ENCODE measurements at regions of chr2 and their contacts with region 1.

Region 1: GRCh38 chr2:64144057-64145013 is at the start of gene PELI1:
- DNase-seq: peak; percentile 96
- H3K4me3 Mint-ChIP-seq: peak within 1 kb of the TSS; percentile 91
- H3K27ac Mint-ChIP-seq: peak within 1 kb of the TSS; percentile 88
- H3K4me1 Mint-ChIP-seq: peaks cover 24% of the 10 kb centered on the region
- H3K27me3 Mint-ChIP-seq: no peaks in the 10 kb centered on the region
- total RNA-seq, gene PELI1: 44.9 to 45.0 TPM

Region 2: DNA sequence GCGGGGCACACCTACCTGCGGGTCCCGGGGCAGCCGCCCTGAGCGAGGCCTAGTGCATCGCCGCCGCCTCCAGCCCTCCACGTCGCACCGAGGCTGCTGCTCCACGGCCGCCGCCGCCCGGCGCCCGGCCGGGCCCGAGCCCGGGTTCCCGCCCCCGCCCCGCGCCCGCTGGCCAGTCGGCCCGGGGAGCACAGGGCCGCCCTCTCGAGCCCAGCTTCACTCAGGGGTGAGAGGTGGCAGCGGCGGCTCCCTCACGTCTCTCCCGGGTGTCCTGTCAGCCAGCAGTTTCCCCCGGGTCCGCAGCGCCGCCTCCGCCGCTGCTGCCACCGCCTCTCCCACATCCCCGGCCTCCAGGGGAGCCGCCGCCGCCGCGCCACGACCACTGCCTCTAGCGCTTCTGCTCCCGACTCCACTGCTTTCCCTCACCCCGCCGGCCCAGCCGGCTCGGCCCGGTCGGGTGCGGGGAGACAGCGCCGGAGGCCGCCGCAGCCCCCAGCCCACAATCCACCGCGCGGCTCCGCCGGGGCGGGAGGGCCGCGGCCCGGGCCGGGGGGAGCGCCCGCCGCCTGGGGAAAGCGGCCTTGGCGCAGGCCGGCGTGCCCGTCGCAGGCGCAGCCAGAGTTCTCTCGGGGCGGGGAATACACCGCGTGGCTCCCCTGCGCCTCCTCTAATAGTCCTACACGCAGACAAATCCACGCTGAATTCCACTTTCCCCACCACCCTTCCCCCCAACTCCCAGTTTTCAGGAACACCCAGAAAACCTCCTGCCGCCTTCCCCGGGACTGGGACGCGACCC is 125.2 kb before region 1 on chr2 and contains the start of gene VPS54:
- CTCF ChIA-PET with region 1: no interaction called
- POLR2A ChIA-PET with region 1: interaction called, 11 read pairs
- DNase-seq: peak; percentile 65
- H3K4me3 Mint-ChIP-seq: peak within 1 kb of the TSS; percentile 98
- H3K27ac Mint-ChIP-seq: peak within 1 kb of the TSS; percentile 96
- H3K4me1 Mint-ChIP-seq: peaks cover 42% of the 10 kb centered on the region
- H3K27me3 Mint-ChIP-seq: no peaks in the 10 kb centered on the region
- total RNA-seq, gene VPS54: 18.8 to 19.2 TPM

Region 3: DNA sequence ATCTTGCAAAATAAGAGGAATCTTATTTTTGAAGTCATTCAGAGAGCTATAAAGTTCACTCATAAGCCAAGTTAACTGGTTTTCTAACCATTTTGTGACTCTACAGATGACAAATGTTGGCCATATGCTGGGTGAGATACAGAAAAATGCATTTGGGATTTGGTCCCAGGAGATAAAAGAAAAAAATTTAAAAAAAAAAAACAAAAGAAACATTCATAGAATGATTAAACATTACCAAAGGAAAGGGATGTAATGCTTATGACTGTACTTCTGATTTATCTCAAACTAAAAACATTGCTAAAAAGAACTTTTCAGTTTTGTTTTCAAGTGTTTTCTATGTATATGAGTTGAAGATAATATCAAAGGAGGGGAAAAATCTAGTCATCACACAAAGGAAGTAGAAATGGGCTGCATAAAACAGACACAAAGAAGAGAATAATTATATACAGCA is 43.2 kb before region 1 on chr2:
- CTCF ChIA-PET with region 1: no interaction called
- POLR2A ChIA-PET with region 1: interaction called, 24 read pairs
- DNase-seq: no peak
- H3K4me3 Mint-ChIP-seq: no peak overlapping the region
- H3K27ac Mint-ChIP-seq: peak overlapping the region; percentile 70
- H3K4me1 Mint-ChIP-seq: peaks cover 38% of the 10 kb centered on the region
- H3K27me3 Mint-ChIP-seq: no peaks in the 10 kb centered on the region

Region 4: GRCh38 chr2:64114063-64114911 is 30.0 kb before region 1 on chr2:
- CTCF ChIA-PET with region 1: no interaction called
- POLR2A ChIA-PET with region 1: interaction called, 28 read pairs
- DNase-seq: no peak
- H3K4me3 Mint-ChIP-seq: peak overlapping the region; percentile 15
- H3K27ac Mint-ChIP-seq: peak overlapping the region; percentile 67
- H3K4me1 Mint-ChIP-seq: peaks cover 69% of the 10 kb centered on the region
- H3K27me3 Mint-ChIP-seq: no peaks in the 10 kb centered on the region

Region 5: DNA sequence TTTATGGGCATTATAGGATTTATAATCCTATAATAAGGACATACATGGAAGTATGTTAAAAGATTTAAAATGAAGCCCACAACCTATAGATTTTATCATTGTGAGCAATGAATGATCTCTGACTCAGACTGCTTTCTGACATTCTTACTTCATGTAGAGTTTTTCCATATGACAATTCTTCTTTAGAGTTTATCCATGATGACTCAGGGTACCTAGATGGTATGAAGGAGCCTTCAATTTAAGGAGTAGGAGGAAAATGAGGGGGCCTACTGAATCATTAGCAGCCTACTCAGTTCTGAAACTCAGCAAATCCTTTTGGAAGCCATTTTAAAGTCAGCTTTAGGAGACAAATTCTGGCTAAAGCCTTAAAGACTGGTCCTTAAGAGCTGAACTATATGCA is 10.5 kb before region 1 on chr2:
- CTCF ChIA-PET with region 1: no interaction called
- POLR2A ChIA-PET with region 1: interaction called, 40 read pairs
- DNase-seq: no peak
- H3K4me3 Mint-ChIP-seq: no peak overlapping the region
- H3K27ac Mint-ChIP-seq: no peak overlapping the region
- H3K4me1 Mint-ChIP-seq: peaks cover 79% of the 10 kb centered on the region
- H3K27me3 Mint-ChIP-seq: no peaks in the 10 kb centered on the region

Region 6: DNA sequence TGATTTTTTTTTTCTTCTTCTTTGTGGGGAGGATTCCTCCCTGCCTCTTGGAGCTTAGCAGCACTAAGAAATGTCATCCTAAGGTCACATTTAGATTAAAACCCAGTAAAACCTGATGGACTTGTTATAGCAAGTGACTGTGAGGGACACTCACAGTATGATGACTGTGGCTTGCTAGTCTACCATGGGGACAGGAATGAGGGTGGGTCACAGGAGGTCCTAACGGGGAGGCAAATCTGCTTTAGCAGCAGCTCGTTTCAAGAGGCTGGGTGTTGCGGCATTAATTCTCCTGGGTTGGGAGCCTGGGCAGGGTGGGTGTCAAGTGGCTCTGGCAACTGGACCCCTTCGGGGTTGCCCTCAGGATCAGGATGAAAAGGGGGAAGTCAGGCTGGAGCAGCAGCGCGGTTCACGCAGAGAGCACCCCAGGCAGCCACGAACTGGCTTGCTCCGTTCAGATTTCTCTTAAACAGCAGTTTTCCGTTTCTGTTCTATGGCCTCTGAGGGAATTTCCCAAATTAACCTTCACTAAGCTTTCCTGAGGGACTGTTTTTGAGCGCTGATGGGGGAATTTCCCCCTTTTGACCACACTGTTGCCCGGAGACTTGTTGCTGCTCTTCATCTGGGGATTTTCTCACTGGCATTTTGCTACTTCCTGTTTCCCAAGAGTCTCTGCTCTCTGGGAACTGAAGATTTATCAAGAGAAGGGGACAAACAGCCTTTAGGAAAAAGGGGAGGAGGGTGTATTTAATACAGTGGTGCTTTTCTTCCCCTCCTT is 59.7 kb after region 1 on chr2:
- CTCF ChIA-PET with region 1: no interaction called
- POLR2A ChIA-PET with region 1: interaction called, 21 read pairs
- DNase-seq: peak; percentile 34
- H3K4me3 Mint-ChIP-seq: peak overlapping the region; percentile 54
- H3K27ac Mint-ChIP-seq: peak overlapping the region; percentile 73
- H3K4me1 Mint-ChIP-seq: peaks cover 66% of the 10 kb centered on the region
- H3K27me3 Mint-ChIP-seq: no peaks in the 10 kb centered on the region

Region 7: GRCh38 chr2:64214281-64215115 is 70.2 kb after region 1 on chr2:
- CTCF ChIA-PET with region 1: interaction called, 4 read pairs
- POLR2A ChIA-PET with region 1: interaction called, 40 read pairs
- DNase-seq: peak; percentile 38
- H3K4me3 Mint-ChIP-seq: peak overlapping the region; percentile 43
- H3K27ac Mint-ChIP-seq: peak overlapping the region; percentile 95
- H3K4me1 Mint-ChIP-seq: peaks cover 52% of the 10 kb centered on the region
- H3K27me3 Mint-ChIP-seq: no peaks in the 10 kb centered on the region